MCF 10A (cell line): ENCODE measurements at regions of chr2 and their contacts with region 1.

Region 1: DNA sequence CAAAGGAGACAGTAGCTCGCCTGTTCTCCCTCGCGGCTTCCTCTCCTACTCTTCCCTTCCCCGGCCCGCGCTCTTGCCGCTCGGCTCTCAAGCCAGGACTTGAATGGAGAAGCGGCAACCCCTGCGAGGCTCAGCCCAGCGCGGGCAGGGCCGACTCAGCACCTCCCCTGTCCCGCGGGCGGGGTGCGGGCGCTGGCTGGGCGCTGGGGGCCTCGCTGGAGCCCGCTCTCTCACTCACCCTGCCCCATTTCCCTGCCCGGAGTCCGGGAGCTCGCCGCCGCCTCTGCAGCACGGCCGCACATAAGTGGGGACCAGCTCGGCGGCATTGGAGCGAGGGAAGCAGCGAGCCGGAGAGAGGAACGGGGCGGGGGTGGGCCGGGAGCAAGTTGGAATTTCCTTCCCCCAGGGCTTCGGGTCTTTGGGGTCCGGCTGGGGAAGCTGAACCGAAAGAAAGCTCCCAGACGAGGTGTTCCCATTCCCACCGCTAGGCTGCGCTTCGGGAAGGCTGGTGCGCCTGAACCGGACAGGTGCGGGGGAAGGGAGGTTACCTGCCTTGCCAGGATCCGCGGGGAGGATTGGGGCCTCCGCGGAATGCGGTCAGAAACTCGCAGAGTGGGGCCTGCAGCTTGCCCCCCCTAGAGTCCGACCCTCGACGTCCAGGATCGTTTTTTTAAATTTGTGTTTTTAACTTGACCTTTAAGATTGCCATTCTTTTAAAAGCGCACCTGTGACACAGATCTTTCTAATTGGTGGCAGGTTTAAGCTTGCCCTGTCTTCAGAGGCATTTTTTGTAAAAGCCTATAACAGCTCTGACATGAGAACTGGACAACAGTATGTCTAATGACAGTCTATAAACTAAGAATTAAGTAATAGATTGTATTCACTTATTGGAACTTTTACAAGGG is at the start of gene COBLL1:
- DNase-seq: peak; percentile 85
- H3K4me3 Mint-ChIP-seq: peak within 1 kb of the TSS; percentile 98
- H3K27ac Mint-ChIP-seq: peak within 1 kb of the TSS; percentile 50
- H3K4me1 Mint-ChIP-seq: peaks cover 7% of the 10 kb centered on the region
- H3K27me3 Mint-ChIP-seq: no peaks in the 10 kb centered on the region
- CTCF ChIP-seq: peak; percentile 83
- total RNA-seq, gene COBLL1: 37.1 and 47.0 TPM in 2 replicates

Region 2: DNA sequence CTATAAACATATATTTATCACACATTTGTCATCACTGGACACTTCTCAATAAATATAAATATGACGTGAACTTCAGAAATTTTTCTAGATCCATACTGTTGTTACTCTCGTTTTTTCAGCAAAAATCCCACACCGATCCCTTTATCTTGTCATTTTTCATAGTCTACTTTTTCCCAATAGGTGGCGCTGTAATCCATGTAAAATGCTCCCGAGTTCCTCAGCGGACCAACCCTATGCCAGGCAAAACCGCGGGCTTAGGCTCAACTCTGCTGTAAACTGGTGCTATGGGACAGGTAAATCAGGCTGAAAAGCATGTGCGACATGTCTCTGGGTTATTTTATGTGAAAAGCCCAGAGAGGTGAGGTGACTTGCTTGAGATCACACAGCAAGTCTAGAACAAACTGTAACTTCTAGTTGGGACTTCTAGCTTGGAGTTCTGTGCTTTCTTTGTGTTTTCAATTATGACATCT is 104.3 kb before region 1 on chr2:
- CTCF ChIA-PET with region 1: interaction called, 49 read pairs
- POLR2A ChIA-PET with region 1: interaction called, 43 read pairs
- intact Hi-C with region 1: loop called (anchors 1 kb)
- DNase-seq: peak; percentile 80
- H3K4me3 Mint-ChIP-seq: no peak overlapping the region
- H3K27ac Mint-ChIP-seq: no peak overlapping the region
- H3K4me1 Mint-ChIP-seq: peaks cover 33% of the 10 kb centered on the region
- H3K27me3 Mint-ChIP-seq: no peaks in the 10 kb centered on the region
- CTCF ChIP-seq: peak; percentile 56

Region 3: GRCh38 chr2:164808776-164809175 is 33.2 kb before region 1 on chr2:
- CTCF ChIA-PET with region 1: interaction called, 6 read pairs
- POLR2A ChIA-PET with region 1: interaction called, 41 read pairs
- intact Hi-C with region 1: no loop called
- DNase-seq: no peak
- H3K4me3 Mint-ChIP-seq: no peak overlapping the region
- H3K27ac Mint-ChIP-seq: no peak overlapping the region
- H3K4me1 Mint-ChIP-seq: peaks cover 5% of the 10 kb centered on the region
- H3K27me3 Mint-ChIP-seq: no peaks in the 10 kb centered on the region
- CTCF ChIP-seq: no peak

Region 4: DNA sequence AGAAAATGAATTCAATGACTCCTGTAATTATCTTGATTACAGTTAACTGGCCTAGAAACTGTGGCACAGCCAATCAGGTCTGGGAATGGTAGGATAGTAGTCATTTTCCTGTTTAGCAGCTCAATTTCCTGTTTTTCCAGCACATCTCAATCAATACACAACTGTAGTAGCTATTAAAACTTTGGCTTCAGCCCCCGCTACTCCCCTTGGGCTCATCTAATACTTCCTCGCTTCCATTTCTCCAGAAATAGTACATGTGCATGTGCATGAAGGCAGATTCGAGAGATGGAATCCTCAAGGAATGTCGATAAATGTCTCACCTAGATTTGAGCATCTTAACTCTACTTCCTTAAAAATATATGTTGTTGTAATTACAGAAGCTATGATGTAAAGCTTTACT is 10.1 kb before region 1 on chr2:
- CTCF ChIA-PET with region 1: interaction called, 17 read pairs
- POLR2A ChIA-PET with region 1: interaction called, 26 read pairs
- intact Hi-C with region 1: no loop called
- DNase-seq: no peak
- H3K4me3 Mint-ChIP-seq: no peak overlapping the region
- H3K27ac Mint-ChIP-seq: no peak overlapping the region
- H3K4me1 Mint-ChIP-seq: peaks cover 15% of the 10 kb centered on the region
- H3K27me3 Mint-ChIP-seq: no peaks in the 10 kb centered on the region
- CTCF ChIP-seq: no peak

Region 5: GRCh38 chr2:164868563-164869419 is 26.8 kb after region 1 on chr2:
- CTCF ChIA-PET with region 1: interaction called, 11 read pairs
- POLR2A ChIA-PET with region 1: no interaction called
- intact Hi-C with region 1: no loop called
- DNase-seq: no peak
- H3K4me3 Mint-ChIP-seq: no peak overlapping the region
- H3K27ac Mint-ChIP-seq: no peak overlapping the region
- H3K4me1 Mint-ChIP-seq: peaks cover 11% of the 10 kb centered on the region
- H3K27me3 Mint-ChIP-seq: no peaks in the 10 kb centered on the region
- CTCF ChIP-seq: no peak

Region 6: DNA sequence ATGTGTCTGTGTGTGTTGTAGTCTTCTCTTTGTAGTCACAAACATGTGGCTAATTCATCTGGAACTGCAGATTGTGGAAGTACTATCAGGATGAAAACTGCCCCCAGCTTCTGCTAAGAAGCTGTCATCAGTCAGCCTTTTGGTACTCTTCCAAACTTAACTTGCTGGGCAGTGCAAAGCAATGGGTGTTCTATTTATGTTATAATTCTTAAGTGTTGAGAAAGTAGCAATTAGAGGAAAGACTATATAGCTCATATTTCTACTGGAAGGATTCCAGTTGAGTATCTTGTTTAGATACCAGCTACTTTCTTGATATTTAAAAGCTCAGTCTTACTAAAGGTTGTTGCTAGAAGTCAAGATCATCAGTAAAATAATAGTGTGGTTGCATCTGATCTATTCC is 61.2 kb after region 1 on chr2:
- CTCF ChIA-PET with region 1: interaction called, 30 read pairs
- POLR2A ChIA-PET with region 1: interaction called, 26 read pairs
- intact Hi-C with region 1: no loop called
- DNase-seq: peak; percentile 59
- H3K4me3 Mint-ChIP-seq: no peak overlapping the region
- H3K27ac Mint-ChIP-seq: no peak overlapping the region
- H3K4me1 Mint-ChIP-seq: peaks cover 23% of the 10 kb centered on the region
- H3K27me3 Mint-ChIP-seq: no peaks in the 10 kb centered on the region
- CTCF ChIP-seq: no peak

Region 7: DNA sequence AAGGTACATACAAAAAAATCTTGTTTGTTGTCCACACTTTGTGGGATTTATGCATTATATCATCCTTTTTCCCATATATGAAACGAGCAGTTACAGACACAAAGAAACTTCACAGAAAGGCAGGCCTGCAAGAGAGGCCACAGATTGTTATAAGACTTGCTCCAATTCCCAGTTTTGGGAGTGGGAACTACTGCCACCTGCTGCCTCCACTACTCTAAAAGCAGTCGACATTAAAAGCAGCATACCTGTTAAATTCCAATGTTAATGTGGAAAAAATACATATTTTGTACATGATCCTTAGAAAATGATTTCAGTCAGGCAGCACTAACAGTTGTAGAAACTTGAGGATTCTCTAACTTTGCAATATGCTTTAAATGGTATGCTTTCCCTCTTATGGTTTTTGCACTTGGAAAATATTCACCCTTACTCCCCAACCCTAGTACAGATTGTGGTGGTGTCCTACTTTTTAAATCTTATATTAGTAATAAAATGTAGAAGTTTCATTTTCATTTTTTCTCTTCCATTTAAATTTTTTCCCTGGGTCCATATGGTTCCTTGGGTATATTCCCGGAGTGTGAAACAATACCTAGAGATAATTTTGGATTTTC is 75.4 kb after region 1 on chr2:
- CTCF ChIA-PET with region 1: interaction called, 47 read pairs
- POLR2A ChIA-PET with region 1: interaction called, 54 read pairs
- intact Hi-C with region 1: loop called (anchors 1 kb)
- DNase-seq: peak; percentile 65
- H3K4me3 Mint-ChIP-seq: no peak overlapping the region
- H3K27ac Mint-ChIP-seq: no peak overlapping the region
- H3K4me1 Mint-ChIP-seq: peaks cover 8% of the 10 kb centered on the region
- H3K27me3 Mint-ChIP-seq: no peaks in the 10 kb centered on the region
- CTCF ChIP-seq: peak; percentile 58

Region 8: GRCh38 chr2:165203689-165204559 is 362.0 kb after region 1 on chr2 and contains the start of gene SCN3A:
- CTCF ChIA-PET with region 1: no interaction called
- POLR2A ChIA-PET with region 1: no interaction called
- intact Hi-C with region 1: no loop called
- DNase-seq: peak; percentile 58
- H3K4me3 Mint-ChIP-seq: no peak within 1 kb of the TSS
- H3K27ac Mint-ChIP-seq: no peak within 1 kb of the TSS
- H3K4me1 Mint-ChIP-seq: no peaks in the 10 kb centered on the region
- H3K27me3 Mint-ChIP-seq: peaks cover 72% of the 10 kb centered on the region
- CTCF ChIP-seq: peak; percentile 70
- total RNA-seq, gene SCN3A: not detected in 2 replicates